GM12878 (cell line): ENCODE measurements at regions of chr1 and their contacts with region 1.

Region 1: GRCh38 chr1:155044812-155045690 is 6.1 kb upstream of the ADAM15 start:
- DNase-seq: no peak
- ATAC-seq: peak; percentile 98
- H3K4me3 ChIP-seq: no peak overlapping the region
- H3K27ac ChIP-seq: no peak overlapping the region
- H3K4me1 ChIP-seq: peaks cover under 1% of the 10 kb centered on the region; the same call in 1 of the 2 replicates
- H3K27me3 ChIP-seq: peaks cover 2 to 3% of the 10 kb centered on the region in 2 experiments; a peak in 2 of 4 replicates
- CTCF ChIP-seq: peak; percentile 76 to 87 (median 84)
- EP300 ChIP-seq: no peak
- POLR2A ChIP-seq: no peak
- RAD21 ChIP-seq: peak; percentile 71

Region 2: DNA sequence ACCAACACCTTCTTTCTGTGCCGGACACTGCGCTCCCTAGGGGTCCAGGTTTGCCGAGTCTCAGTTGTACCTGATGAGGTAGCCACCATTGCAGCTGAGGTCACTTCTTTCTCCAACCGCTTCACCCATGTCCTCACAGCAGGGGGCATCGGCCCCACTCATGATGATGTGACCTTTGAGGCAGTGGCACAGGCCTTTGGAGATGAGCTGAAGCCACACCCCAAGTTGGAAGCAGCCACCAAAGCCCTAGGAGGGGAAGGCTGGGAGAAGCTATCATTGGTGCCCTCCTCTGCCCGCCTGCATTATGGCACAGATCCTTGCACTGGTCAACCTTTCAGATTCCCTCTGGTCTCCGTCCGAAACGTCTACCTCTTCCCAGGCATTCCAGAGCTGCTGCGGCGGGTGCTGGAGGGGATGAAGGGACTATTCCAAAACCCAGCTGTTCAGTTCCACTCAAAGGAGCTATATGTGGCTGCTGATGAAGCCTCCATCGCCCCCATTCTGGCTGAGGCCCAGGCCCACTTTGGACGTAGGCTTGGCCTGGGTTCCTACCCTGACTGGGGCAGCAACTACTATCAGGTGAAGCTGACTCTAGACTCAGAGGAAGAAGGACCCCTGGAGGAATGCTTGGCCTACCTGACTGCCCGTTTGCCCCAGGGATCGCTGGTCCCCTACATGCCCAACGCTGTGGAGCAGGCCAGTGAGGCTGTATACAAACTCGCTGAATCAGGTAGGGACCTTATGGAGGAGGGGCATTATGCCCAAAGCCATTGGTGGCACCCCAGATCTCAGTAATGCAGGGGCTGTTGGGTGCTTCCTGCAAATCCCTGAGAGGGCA is 56.7 kb before region 1 on chr1:
- CTCF ChIA-PET with region 1: interaction called, 13 read pairs
- POLR2A ChIA-PET with region 1: no interaction called
- RAD21 ChIA-PET with region 1: no interaction called
- SMC1A ChIA-PET with region 1: interaction called, 3 read pairs
- in situ Hi-C with region 1: no loop called
- intact Hi-C with region 1: no loop called
- DNase-seq: no peak
- ATAC-seq: no peak
- H3K4me3 ChIP-seq: no peak overlapping the region
- H3K27ac ChIP-seq: no peak overlapping the region
- H3K4me1 ChIP-seq: no peaks in the 10 kb centered on the region
- H3K27me3 ChIP-seq: no peaks in the 10 kb centered on the region
- CTCF ChIP-seq: peak in 2 of 3 experiments; percentile 16 to 34; a peak in 2 of 6 replicates
- EP300 ChIP-seq: no peak
- POLR2A ChIP-seq: no peak
- RAD21 ChIP-seq: peak; percentile 22; the same call in 1 of the 2 replicates

Region 3: DNA sequence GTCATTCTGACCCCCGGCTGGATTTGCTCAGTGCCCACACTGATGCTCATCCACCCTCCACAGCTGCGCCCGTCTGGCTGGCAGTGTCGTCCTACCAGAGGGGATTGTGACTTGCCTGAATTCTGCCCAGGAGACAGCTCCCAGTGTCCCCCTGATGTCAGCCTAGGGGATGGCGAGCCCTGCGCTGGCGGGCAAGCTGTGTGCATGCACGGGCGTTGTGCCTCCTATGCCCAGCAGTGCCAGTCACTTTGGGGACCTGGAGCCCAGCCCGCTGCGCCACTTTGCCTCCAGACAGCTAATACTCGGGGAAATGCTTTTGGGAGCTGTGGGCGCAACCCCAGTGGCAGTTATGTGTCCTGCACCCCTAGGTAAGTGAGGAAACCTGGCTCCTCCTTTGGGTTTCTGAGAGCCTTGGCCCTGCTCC is 12.7 kb after region 1 on chr1:
- CTCF ChIA-PET with region 1: interaction called, 121 read pairs
- POLR2A ChIA-PET with region 1: interaction called, 3 read pairs
- RAD21 ChIA-PET with region 1: interaction called, 14 read pairs
- SMC1A ChIA-PET with region 1: interaction called, 13 read pairs
- in situ Hi-C with region 1: no loop called
- intact Hi-C with region 1: loop called (anchors 1 kb)
- DNase-seq: no peak
- ATAC-seq: no peak
- H3K4me3 ChIP-seq: no peak overlapping the region
- H3K27ac ChIP-seq: no peak overlapping the region
- H3K4me1 ChIP-seq: peaks cover 11% of the 10 kb centered on the region
- H3K27me3 ChIP-seq: no peaks in the 10 kb centered on the region
- CTCF ChIP-seq: 0 out of 6 replicates have a peak, but pooled peaks of 1 of the 3 experiments have one; percentile 11
- EP300 ChIP-seq: no peak
- POLR2A ChIP-seq: no peak
- RAD21 ChIP-seq: no peak